Endothelial cell of umbilical vein (primary cell): ENCODE measurements at regions of chr6 and their contacts with region 1.

Region 1: GRCh38 chr6:11317885-11318771 is 85.7 kb upstream of the NEDD9 start:
- DNase-seq: peak; percentile 99
- H3K4me3 ChIP-seq: no peak overlapping the region
- H3K27ac ChIP-seq: peak overlapping the region; percentile 100
- H3K4me1 ChIP-seq: peaks cover 37% of the 10 kb centered on the region
- H3K27me3 ChIP-seq: no peaks in the 10 kb centered on the region
- CTCF ChIP-seq: no peak
- POLR2A ChIP-seq: no peak

Region 2: GRCh38 chr6:11093589-11094410 is 224.3 kb before region 1 on chr6 and contains the start of gene SMIM13:
- CTCF ChIA-PET with region 1: no interaction called
- POLR2A ChIA-PET with region 1: no interaction called
- dilution Hi-C with region 1: no loop called
- intact Hi-C with region 1: loop called (anchors 2 kb)
- DNase-seq: peak; percentile 99
- H3K4me3 ChIP-seq: peak within 1 kb of the TSS; percentile 54 to 98 (median 86)
- H3K27ac ChIP-seq: peak within 1 kb of the TSS; percentile 87
- H3K4me1 ChIP-seq: peaks cover 18% of the 10 kb centered on the region
- H3K27me3 ChIP-seq: no peaks in the 10 kb centered on the region
- CTCF ChIP-seq: peak; percentile 38 to 47
- POLR2A ChIP-seq: peak; percentile 68
- total RNA-seq, gene SMIM13: 14.7 and 19.4 TPM in 2 replicates

Region 3: GRCh38 chr6:11212625-11213024 is 105.5 kb before region 1 on chr6:
- CTCF ChIA-PET with region 1: interaction called, 3 read pairs
- POLR2A ChIA-PET with region 1: no interaction called
- dilution Hi-C with region 1: no loop called
- intact Hi-C with region 1: loop called (anchors 1 kb)
- DNase-seq: peak; percentile 71
- H3K4me3 ChIP-seq: no peak overlapping the region
- H3K27ac ChIP-seq: peak overlapping the region; percentile 77
- H3K4me1 ChIP-seq: peaks cover 95% of the 10 kb centered on the region
- H3K27me3 ChIP-seq: no peaks in the 10 kb centered on the region
- CTCF ChIP-seq: no peak
- POLR2A ChIP-seq: no peak

Region 4: GRCh38 chr6:11263291-11263775 is 54.8 kb before region 1 on chr6:
- CTCF ChIA-PET with region 1: interaction called, 4 read pairs
- POLR2A ChIA-PET with region 1: interaction called, 3 read pairs
- dilution Hi-C with region 1: no loop called
- intact Hi-C with region 1: loop called (anchors 1 kb)
- DNase-seq: peak; percentile 86
- H3K4me3 ChIP-seq: no peak overlapping the region
- H3K27ac ChIP-seq: peak overlapping the region; percentile 67
- H3K4me1 ChIP-seq: peaks cover 19% of the 10 kb centered on the region
- H3K27me3 ChIP-seq: no peaks in the 10 kb centered on the region
- CTCF ChIP-seq: no peak
- POLR2A ChIP-seq: no peak

Region 5: GRCh38 chr6:11291582-11291981 is 26.5 kb before region 1 on chr6:
- CTCF ChIA-PET with region 1: no interaction called
- POLR2A ChIA-PET with region 1: no interaction called
- dilution Hi-C with region 1: no loop called
- intact Hi-C with region 1: no loop called
- DNase-seq: no peak
- H3K4me3 ChIP-seq: no peak overlapping the region
- H3K27ac ChIP-seq: no peak overlapping the region
- H3K4me1 ChIP-seq: no peaks in the 10 kb centered on the region
- H3K27me3 ChIP-seq: no peaks in the 10 kb centered on the region
- CTCF ChIP-seq: no peak
- POLR2A ChIP-seq: no peak

Region 6: DNA sequence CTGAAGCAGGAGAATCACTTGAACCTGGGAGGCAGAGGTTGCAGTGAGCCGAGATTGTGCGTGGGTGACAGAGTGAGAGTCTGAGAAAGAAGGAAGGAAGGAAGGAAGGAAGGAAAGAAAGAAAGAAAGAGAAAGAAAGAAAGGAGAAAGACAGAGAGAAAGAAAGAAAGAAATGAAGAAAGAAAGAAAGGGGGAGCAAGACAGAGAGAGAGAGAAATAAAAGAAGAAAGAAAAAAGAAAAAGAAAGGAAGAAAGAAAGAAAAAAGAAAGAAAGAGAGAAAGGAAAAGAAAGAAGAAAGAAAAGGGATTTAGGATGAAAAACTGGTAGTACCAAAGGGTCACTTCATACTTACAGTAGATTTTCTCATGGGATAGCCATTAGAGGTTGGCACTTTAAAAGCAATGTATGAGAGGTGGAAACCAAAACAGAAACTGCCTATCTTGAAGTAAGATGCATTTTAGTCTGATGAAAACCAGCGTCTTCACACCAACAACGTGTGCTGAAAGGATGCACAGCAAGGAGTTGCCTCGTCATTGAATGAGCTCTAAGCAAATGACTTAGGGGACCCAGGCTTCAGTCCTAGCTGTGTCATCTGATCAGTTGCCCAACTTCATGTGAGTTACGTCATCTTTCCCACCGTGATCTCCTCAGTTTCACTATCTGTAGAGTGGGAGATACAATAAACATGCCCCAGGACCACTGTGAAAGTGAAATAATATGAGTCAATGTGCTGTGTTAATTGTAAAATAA is 48.2 kb after region 1 on chr6:
- CTCF ChIA-PET with region 1: no interaction called
- POLR2A ChIA-PET with region 1: no interaction called
- dilution Hi-C with region 1: no loop called
- intact Hi-C with region 1: loop called (anchors 1 kb)
- DNase-seq: peak; percentile 11
- H3K4me3 ChIP-seq: no peak overlapping the region
- H3K27ac ChIP-seq: peak overlapping the region; percentile 58
- H3K4me1 ChIP-seq: peaks cover 51% of the 10 kb centered on the region
- H3K27me3 ChIP-seq: no peaks in the 10 kb centered on the region
- CTCF ChIP-seq: no peak
- POLR2A ChIP-seq: no peak

Region 7: DNA sequence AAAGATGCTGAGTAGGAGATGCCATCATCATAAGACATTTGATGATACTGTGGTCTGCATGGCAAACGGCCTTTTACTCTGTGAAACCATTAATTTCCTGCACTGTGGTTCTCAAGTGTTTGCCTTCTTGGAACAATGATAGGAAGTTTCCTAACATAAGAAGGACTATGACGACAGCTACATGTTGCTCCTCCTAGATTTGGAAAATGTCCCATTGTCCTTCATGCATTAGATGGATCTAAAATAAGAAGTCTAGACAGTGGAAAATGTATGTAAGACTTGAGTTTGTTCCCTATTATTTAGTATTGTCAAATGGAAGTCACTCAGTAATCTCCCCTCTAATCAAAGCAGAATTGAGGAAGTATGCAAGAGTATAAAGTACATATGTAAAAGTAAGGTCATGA is 120.9 kb after region 1 on chr6:
- CTCF ChIA-PET with region 1: no interaction called
- POLR2A ChIA-PET with region 1: no interaction called
- dilution Hi-C with region 1: no loop called
- intact Hi-C with region 1: loop called (anchors 1 kb)
- DNase-seq: peak; percentile 91
- H3K4me3 ChIP-seq: no peak overlapping the region
- H3K27ac ChIP-seq: peak overlapping the region; percentile 56
- H3K4me1 ChIP-seq: peaks cover 19% of the 10 kb centered on the region
- H3K27me3 ChIP-seq: no peaks in the 10 kb centered on the region
- CTCF ChIP-seq: no peak
- POLR2A ChIP-seq: no peak

Region 8: DNA sequence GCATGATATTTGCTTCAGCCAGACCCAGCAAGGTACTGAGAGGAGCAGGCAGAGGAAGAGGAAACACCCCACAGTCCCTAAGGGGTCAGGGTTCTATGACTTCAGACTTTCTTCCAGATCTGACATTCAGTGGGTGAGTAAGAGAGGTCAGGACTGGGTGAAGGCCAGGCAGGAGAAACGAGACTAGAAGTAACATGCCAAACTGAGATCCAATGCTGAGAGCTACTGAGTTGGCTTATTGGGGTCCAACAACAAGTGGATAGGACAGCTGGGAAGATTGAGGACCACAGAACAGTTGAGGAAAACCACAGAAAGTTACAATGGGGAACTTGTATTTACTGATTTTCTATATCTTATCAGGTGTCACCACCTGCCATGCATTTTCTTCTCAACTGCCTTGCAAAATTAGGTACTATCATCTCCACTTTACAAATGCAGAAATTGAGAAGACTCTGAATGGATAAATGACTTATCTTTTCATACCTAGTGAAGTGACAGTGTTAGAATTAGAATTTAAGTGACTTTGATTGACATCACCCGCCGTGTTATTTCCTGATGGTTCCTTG is 650.2 kb after region 1 on chr6:
- CTCF ChIA-PET with region 1: no interaction called
- POLR2A ChIA-PET with region 1: no interaction called
- dilution Hi-C with region 1: no loop called
- intact Hi-C with region 1: no loop called
- DNase-seq: no peak
- H3K4me3 ChIP-seq: no peak overlapping the region
- H3K27ac ChIP-seq: no peak overlapping the region
- H3K4me1 ChIP-seq: no peaks in the 10 kb centered on the region
- H3K27me3 ChIP-seq: peaks cover 0 to 2% of the 10 kb centered on the region in 2 experiments
- CTCF ChIP-seq: no peak
- POLR2A ChIP-seq: no peak